ENCODE measurements at regions of chr6 and their contacts with region 1.

Region 1: GRCh38 chr6:3990692-3991501 is 88.0 kb downstream of the FAM217A start:
- DNase-seq: peak; percentile 83 to 96 (median 93)
- H3K4me3 ChIP-seq: peak overlapping the region in 2 of 4 donors; percentile 19 to 48
- H3K27ac ChIP-seq: peak overlapping the region in 4 of 5 donors; percentile 11 to 69 (median 35)
- H3K4me1 ChIP-seq: peaks cover 4 to 12% of the 10 kb centered on the region in 2 donors
- H3K27me3 ChIP-seq: no peaks in the 10 kb centered on the region
- CTCF ChIP-seq: peak; percentile 63 to 84 (median 78)
- POLR2A ChIP-seq: peak in 1 of 2 donors; percentile 18

Region 2: DNA sequence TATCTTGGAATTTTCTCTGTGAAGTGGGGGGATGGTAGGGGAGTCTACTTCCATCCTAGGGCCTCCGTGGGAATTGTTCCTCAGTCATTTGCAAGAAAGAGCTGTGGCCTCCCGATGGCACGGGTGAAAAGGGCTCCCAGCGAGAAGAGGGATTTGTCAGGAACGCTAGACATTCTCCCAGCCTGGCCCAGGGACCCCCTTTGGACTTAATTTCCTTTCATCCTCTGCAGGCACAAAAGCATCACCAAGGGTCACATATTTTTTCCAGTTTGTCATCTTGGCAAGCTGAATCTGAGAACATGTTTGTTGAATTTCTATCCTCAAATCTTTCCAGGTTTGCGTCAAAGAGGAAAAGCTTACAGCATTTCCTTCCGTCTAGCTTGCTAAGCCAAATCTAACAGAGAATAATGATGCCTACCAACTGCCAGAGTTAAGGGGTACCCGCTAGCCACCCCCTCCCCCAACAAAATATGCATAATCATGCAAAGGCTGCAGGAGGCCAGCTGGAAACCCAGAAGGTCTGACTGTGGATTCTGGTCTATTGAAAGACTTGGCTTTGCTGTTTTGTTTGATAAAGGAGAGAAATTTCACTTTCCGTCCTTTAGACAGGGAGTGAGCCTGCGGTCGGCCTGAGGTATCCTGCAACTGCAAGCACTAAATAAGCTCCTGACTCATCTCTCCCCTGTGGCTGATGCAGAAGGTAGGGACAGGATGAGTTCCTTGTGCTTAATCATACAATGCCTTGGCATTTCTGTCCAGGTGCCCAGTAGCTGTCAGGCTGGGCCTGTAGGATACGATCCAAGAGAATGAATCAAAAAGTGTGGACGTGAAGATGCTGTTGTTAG is 709.0 kb before region 1 on chr6:
- intact Hi-C with region 1: loop called in 1 of 2 experiments (anchors 10 kb)
- DNase-seq: peak in 4 of 7 donors; percentile 16 to 37 (median 34)
- H3K4me3 ChIP-seq: no peak overlapping the region
- H3K27ac ChIP-seq: peak overlapping the region in 2 of 5 donors; percentile 33 to 71
- H3K4me1 ChIP-seq: peaks cover 0 to 5% of the 10 kb centered on the region in 2 donors
- H3K27me3 ChIP-seq: no peaks in the 10 kb centered on the region
- CTCF ChIP-seq: no peak
- POLR2A ChIP-seq: no peak

Region 3: DNA sequence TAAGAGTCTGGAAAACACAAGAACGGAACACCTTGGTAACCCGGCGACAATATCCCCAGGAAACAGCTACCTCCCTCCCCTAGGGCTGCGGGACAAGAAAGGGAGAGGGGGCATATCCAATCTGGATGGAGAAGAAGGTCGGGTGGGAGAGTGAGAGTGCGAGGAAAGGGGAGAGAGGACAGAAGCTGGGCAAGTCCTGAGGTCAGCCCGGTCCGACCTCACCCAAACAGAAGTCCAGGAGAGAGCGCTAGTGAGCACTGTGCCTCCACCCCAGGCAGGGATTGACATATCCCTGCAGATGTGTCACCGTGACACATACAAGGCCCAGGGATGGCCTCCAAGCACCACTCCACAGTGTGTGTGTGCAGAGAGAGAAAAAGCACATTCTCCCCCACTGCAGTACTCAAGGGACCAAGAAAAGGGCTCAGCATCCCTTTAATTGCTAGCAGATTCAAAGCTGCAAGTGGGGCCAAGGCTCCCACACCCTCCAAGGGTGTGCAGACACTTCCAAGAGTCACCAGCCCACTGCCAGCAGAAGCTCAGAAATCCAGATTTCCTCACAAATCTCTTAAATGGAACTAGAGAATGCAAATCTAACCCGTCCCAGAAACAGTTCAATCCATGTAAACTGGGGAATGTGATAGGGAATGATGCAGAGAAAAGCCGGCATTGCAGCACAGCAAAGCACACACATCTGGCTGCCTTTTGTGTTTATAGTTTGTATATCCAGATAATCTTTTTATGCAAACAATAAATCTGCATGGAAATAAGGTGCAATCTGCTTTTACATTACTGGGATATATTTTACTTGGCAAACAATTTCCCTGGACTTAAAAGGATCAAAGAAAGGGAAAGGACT is 242.5 kb before region 1 on chr6:
- intact Hi-C with region 1: loop called (anchors 5 kb)
- DNase-seq: peak; percentile 75 to 90 (median 86)
- H3K4me3 ChIP-seq: peak overlapping the region in 1 of 4 donors; percentile 1
- H3K27ac ChIP-seq: peak overlapping the region in 1 of 5 donors; percentile 96
- H3K4me1 ChIP-seq: peaks cover 19 to 38% of the 10 kb centered on the region in 2 donors
- H3K27me3 ChIP-seq: no peaks in the 10 kb centered on the region
- CTCF ChIP-seq: peak; percentile 47 to 77 (median 72)
- POLR2A ChIP-seq: no peak

Measured in adrenal gland (tissue), 19 donors.